ENCODE measurements at regions of chr2 and their contacts with region 1.

Region 1: DNA sequence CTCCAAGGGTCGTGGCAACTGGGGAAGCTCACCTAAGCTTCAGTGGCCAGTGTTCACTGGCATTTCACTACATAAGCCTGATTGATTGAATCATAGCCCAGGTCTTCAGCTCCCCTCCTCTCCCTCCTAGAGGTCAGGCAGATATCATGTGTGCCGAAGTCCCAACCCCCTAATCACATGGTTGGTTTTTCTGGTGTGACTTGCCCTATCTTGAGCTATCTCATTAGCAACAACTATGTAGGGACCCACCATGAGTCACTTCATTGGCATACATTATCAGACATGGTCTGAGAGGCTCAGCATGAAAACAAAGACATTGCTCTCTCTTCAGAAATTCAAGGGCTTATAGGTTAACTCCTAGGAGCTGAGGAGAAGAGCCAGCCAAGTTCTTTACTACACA is 76.8 kb downstream of the LYPD1 start:
- DNase-seq: no peak
- H3K4me3 ChIP-seq: no peak overlapping the region
- H3K27ac ChIP-seq: no peak overlapping the region
- H3K27me3 ChIP-seq: no peaks in the 10 kb centered on the region
- CTCF ChIP-seq: no peak

Region 2: DNA sequence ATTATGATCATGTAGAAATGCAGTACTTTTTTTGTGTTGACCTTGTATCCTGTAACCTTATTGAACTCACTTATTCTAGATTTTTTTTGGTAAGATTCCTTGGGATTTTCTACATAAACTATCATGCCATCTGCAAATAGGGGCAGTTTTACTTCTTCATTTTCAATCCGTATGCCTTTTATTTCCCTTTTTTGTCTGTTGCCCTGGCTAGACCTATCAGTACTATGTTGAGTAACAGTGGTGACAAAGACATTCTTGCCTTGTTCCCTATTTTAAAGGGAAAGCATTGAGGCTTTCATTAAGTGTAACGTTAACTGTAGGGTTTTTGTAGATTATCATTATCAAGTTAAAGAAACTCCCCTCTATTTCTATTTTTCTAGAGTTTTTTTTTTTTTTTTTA is 15.5 kb before region 1 on chr2:
- CTCF ChIA-PET with region 1: interaction called, 17 read pairs
- POLR2A ChIA-PET with region 1: no interaction called
- DNase-seq: no peak
- H3K4me3 ChIP-seq: no peak overlapping the region
- H3K27ac ChIP-seq: no peak overlapping the region
- H3K27me3 ChIP-seq: no peaks in the 10 kb centered on the region
- CTCF ChIP-seq: no peak